HCT116 (cell line): ENCODE measurements at regions of chr15 and their contacts with region 1.

Region 1: GRCh38 chr15:59688841-59689625 is at the start of gene BNIP2:
- DNase-seq: peak; percentile 94
- ATAC-seq: peak; percentile 96
- H3K4me3 ChIP-seq: peak within 1 kb of the TSS; percentile 85 to 92
- H3K27ac ChIP-seq: peak within 1 kb of the TSS; percentile 95
- H3K4me1 ChIP-seq: peaks cover 15% of the 10 kb centered on the region in 2 experiments
- H3K27me3 ChIP-seq: no peaks in the 10 kb centered on the region
- CTCF ChIP-seq: no peak
- POLR2A ChIP-seq: no peak
- RAD21 ChIP-seq: no peak
- total RNA-seq, gene BNIP2: 53.1 TPM

Region 2: DNA sequence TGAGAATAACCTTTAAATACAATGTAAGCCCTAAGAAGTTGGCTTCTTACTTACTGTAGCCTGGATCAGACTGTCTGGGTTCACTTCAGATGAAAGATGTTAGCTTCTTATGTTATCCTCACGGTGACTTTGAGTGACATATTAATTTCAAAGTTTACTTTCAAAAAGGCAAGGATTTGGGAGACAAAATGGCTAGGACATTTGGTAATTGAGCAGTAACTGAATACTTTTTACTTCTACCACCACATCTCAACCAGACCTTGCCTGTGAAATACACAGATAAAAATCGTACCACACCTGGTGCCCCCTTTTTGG is 36.1 kb after region 1 on chr15:
- CTCF ChIA-PET with region 1: interaction called, 33 read pairs
- POLR2A ChIA-PET with region 1: no interaction called
- RAD21 ChIA-PET with region 1: no interaction called
- intact Hi-C with region 1: no loop called
- DNase-seq: no peak
- ATAC-seq: no peak
- H3K4me3 ChIP-seq: no peak overlapping the region
- H3K27ac ChIP-seq: no peak overlapping the region
- H3K4me1 ChIP-seq: peaks cover 6 to 7% of the 10 kb centered on the region in 2 experiments; a peak in 3 of 4 replicates
- H3K27me3 ChIP-seq: peaks cover 25% of the 10 kb centered on the region
- CTCF ChIP-seq: no peak
- POLR2A ChIP-seq: no peak
- RAD21 ChIP-seq: no peak

Region 3: GRCh38 chr15:60179786-60180391 is 490.9 kb after region 1 on chr15:
- CTCF ChIA-PET with region 1: interaction called, 8 read pairs
- POLR2A ChIA-PET with region 1: no interaction called
- RAD21 ChIA-PET with region 1: no interaction called
- intact Hi-C with region 1: loop called (anchors 2 kb)
- DNase-seq: peak; percentile 16
- ATAC-seq: peak; percentile 83
- H3K4me3 ChIP-seq: no peak overlapping the region
- H3K27ac ChIP-seq: no peak overlapping the region
- H3K4me1 ChIP-seq: no peaks in the 10 kb centered on the region
- H3K27me3 ChIP-seq: peaks cover 35% of the 10 kb centered on the region
- CTCF ChIP-seq: peak; percentile 38 to 92 (median 88); a peak in 5 of 6 replicates
- POLR2A ChIP-seq: no peak
- RAD21 ChIP-seq: peak; percentile 54

Region 4: GRCh38 chr15:60320365-60320764 is 631.3 kb after region 1 on chr15:
- CTCF ChIA-PET with region 1: interaction called, 50 read pairs
- POLR2A ChIA-PET with region 1: interaction called, 3 read pairs
- RAD21 ChIA-PET with region 1: interaction called in 1 of 2 experiments, 6 read pairs
- intact Hi-C with region 1: no loop called
- DNase-seq: no peak
- ATAC-seq: no peak
- H3K4me3 ChIP-seq: no peak overlapping the region
- H3K27ac ChIP-seq: no peak overlapping the region
- H3K4me1 ChIP-seq: peaks cover 0 to 4% of the 10 kb centered on the region in 2 experiments; a peak in 1 of 4 replicates
- H3K27me3 ChIP-seq: peaks cover 25% of the 10 kb centered on the region
- CTCF ChIP-seq: no peak
- POLR2A ChIP-seq: no peak
- RAD21 ChIP-seq: no peak